Left cardiac atrium (tissue), 4 donors: ENCODE measurements at regions of chr7 and their contacts with region 1.

Region 1: GRCh38 chr7:73446682-73447081 is 13.1 kb downstream of the FZD9 start:
- DNase-seq: no peak
- ATAC-seq: no peak

Region 2: GRCh38 chr7:73496626-73497025 is 49.9 kb after region 1 on chr7:
- intact Hi-C with region 1: loop called in 1 of 2 experiments (anchors 5 kb)
- DNase-seq: no peak
- ATAC-seq: no peak

Region 3: GRCh38 chr7:73522105-73522872 is 75.6 kb after region 1 on chr7 and contains the start of gene BAZ1B:
- intact Hi-C with region 1: no loop called
- DNase-seq: peak; percentile 98
- ATAC-seq: peak; percentile 97 to 98
- total RNA-seq, gene BAZ1B: 40.6 to 44.4 TPM

Region 4: DNA sequence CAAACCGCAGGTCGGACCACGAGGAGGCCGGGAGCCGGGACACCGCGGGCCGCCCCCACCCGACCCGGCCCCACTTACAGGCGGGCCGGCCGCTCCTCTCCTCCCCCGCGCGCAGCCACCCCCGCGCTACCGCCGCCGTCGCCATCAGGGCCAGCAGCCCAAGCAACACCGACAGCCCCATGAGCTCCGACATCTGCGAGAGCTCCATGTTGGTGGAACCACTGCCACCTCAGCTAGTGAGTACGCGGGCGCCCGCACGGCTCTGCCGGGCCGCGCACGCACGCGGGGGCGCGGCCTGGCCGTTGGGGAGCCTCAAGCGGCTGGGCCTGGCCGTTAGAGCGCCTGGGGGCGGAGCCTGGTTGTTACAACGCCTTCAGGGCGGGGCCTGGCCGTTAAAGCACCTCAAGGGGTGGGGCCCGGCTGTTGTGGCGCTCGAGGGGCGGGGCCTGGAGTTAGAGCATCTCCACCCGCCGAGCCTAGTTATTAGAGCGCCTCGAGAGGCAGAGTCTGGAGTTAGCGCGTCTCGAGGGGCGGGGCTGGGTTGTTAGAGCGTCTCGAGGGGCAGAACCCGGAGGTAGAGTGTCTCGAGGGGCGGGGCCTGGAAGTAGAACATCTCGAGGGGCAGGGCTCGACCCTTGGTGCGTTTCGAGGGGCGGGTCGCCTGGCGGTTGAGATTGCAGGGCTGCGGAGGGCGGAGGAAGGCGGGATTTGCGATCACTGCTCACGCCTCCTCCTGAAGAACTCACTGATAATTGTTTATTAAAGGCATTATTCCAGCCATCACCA is 131.9 kb after region 1 on chr7 and contains the start of gene TBL2:
- intact Hi-C with region 1: no loop called
- DNase-seq: peak; percentile 99
- ATAC-seq: peak; percentile 96 to 97
- total RNA-seq, gene TBL2: 14.3 to 24.8 TPM